PC-3 (cell line): ENCODE measurements at regions of chr20 and their contacts with region 1.

Region 1: GRCh38 chr20:14337400-14338171 is at the start of gene FLRT3:
- DNase-seq: peak; percentile 97
- ATAC-seq: peak; percentile 94
- H3K4me3 ChIP-seq: peak within 1 kb of the TSS; percentile 75
- H3K27ac ChIP-seq: peak within 1 kb of the TSS; percentile 44
- H3K4me1 ChIP-seq: peaks cover 15% of the 10 kb centered on the region
- H3K27me3 ChIP-seq: no peaks in the 10 kb centered on the region
- CTCF ChIP-seq: peak; percentile 96
- total RNA-seq, gene FLRT3: 2.6 and 2.8 TPM in 2 replicates

Region 2: GRCh38 chr20:14319704-14320103 is 17.9 kb before region 1 on chr20:
- CTCF ChIA-PET with region 1: no interaction called
- POLR2A ChIA-PET with region 1: interaction called, 12 read pairs
- intact Hi-C with region 1: no loop called
- DNase-seq: no peak
- ATAC-seq: no peak
- H3K4me3 ChIP-seq: no peak overlapping the region
- H3K27ac ChIP-seq: no peak overlapping the region
- H3K4me1 ChIP-seq: no peaks in the 10 kb centered on the region
- H3K27me3 ChIP-seq: no peaks in the 10 kb centered on the region
- CTCF ChIP-seq: no peak

Region 3: GRCh38 chr20:14360416-14360815 is 22.8 kb after region 1 on chr20:
- CTCF ChIA-PET with region 1: no interaction called
- POLR2A ChIA-PET with region 1: no interaction called
- intact Hi-C with region 1: no loop called
- DNase-seq: peak; percentile 30
- ATAC-seq: peak; percentile 35; the same call in 1 of the 2 replicates
- H3K4me3 ChIP-seq: no peak overlapping the region
- H3K27ac ChIP-seq: no peak overlapping the region
- H3K4me1 ChIP-seq: no peaks in the 10 kb centered on the region
- H3K27me3 ChIP-seq: no peaks in the 10 kb centered on the region
- CTCF ChIP-seq: no peak

Region 4: DNA sequence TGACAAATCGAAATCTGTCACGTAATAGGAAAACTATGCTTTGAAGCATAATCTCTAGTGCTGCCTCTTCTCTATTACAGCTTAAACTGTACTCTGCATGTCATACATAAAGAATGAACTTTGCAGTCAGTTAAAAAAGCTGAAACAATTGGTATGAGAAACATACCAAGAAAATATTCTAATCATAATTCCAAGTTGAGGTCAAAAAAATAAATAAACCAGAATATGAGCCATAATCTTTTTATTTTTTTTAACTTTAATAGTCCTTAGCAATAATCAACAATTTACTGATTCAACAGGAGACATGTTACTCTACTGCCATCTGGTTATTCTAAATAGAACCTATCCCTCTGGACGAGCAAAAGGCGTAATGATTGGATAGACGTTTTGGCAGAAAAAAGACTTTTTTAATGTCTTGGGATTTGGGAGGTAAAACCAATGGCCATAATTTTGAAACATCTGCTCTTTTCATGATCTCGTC is 224.2 kb after region 1 on chr20:
- CTCF ChIA-PET with region 1: interaction called, 3 read pairs
- POLR2A ChIA-PET with region 1: no interaction called
- intact Hi-C with region 1: loop called (anchors 1 kb)
- DNase-seq: no peak
- ATAC-seq: no peak
- H3K4me3 ChIP-seq: no peak overlapping the region
- H3K27ac ChIP-seq: no peak overlapping the region
- H3K4me1 ChIP-seq: no peaks in the 10 kb centered on the region
- H3K27me3 ChIP-seq: no peaks in the 10 kb centered on the region
- CTCF ChIP-seq: peak; percentile 22; the same call in 1 of the 2 replicates

Region 5: GRCh38 chr20:14878768-14879697 is 541.4 kb after region 1 on chr20:
- CTCF ChIA-PET with region 1: interaction called, 6 read pairs
- POLR2A ChIA-PET with region 1: no interaction called
- intact Hi-C with region 1: loop called (anchors 2 kb)
- DNase-seq: peak; percentile 98
- ATAC-seq: peak; percentile 95
- H3K4me3 ChIP-seq: peak overlapping the region; percentile 2; the same call in 1 of the 2 replicates
- H3K27ac ChIP-seq: peak overlapping the region; percentile 93
- H3K4me1 ChIP-seq: peaks cover 42% of the 10 kb centered on the region
- H3K27me3 ChIP-seq: no peaks in the 10 kb centered on the region
- CTCF ChIP-seq: no peak

Region 6: GRCh38 chr20:15236812-15237211 is 899.2 kb after region 1 on chr20:
- CTCF ChIA-PET with region 1: interaction called, 10 read pairs
- POLR2A ChIA-PET with region 1: no interaction called
- intact Hi-C with region 1: loop called (anchors 2 kb)
- DNase-seq: peak; percentile 87
- ATAC-seq: peak; percentile 79
- H3K4me3 ChIP-seq: no peak overlapping the region
- H3K27ac ChIP-seq: no peak overlapping the region
- H3K4me1 ChIP-seq: no peaks in the 10 kb centered on the region
- H3K27me3 ChIP-seq: no peaks in the 10 kb centered on the region
- CTCF ChIP-seq: peak; percentile 90